A549 (cell line): ENCODE measurements at regions of chr12 and their contacts with region 1.

Region 1: GRCh38 chr12:52121824-52122539 is 42.5 kb downstream of the SMIM41 start:
- DNase-seq: peak; percentile 67 to 68
- ATAC-seq: peak; percentile 64 to 75
- H3K4me3 ChIP-seq: no peak overlapping the region
- H3K27ac ChIP-seq: no peak overlapping the region
- H3K4me1 ChIP-seq: peaks cover 5% of the 10 kb centered on the region; the same call in 2 of the 3 replicates
- CTCF ChIP-seq: peak; percentile 80
- EP300 ChIP-seq: no peak
- POLR2A ChIP-seq: no peak
- RAD21 ChIP-seq: peak; percentile 77 to 79

Region 2: DNA sequence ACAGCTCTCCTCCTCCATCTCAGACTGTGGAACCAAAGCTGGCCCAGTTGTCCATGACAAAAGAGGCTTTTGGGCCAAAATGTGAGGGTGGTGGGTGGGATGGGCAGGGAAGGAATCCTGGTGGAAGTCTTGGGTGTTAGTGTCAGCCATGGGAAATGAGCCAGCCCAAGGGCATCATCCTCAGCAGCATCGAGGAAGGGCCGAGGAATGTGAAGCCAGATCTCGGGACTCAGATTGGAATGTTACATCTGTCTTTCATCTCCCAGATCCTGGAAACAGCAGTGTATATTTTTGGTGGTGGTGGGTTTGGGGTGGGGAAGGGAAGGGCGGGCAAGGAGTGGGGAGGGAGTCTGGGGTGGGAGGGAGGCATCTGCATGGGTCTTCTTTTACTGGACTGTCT is 127.0 kb before region 1 on chr12:
- CTCF ChIA-PET with region 1: interaction called, 23 read pairs
- POLR2A ChIA-PET with region 1: no interaction called
- DNase-seq: no peak
- ATAC-seq: no peak
- H3K4me3 ChIP-seq: no peak overlapping the region
- H3K27ac ChIP-seq: no peak overlapping the region
- H3K4me1 ChIP-seq: peaks cover 4% of the 10 kb centered on the region; the same call in 2 of the 3 replicates
- CTCF ChIP-seq: no peak
- EP300 ChIP-seq: no peak
- POLR2A ChIP-seq: no peak
- RAD21 ChIP-seq: no peak

Region 3: DNA sequence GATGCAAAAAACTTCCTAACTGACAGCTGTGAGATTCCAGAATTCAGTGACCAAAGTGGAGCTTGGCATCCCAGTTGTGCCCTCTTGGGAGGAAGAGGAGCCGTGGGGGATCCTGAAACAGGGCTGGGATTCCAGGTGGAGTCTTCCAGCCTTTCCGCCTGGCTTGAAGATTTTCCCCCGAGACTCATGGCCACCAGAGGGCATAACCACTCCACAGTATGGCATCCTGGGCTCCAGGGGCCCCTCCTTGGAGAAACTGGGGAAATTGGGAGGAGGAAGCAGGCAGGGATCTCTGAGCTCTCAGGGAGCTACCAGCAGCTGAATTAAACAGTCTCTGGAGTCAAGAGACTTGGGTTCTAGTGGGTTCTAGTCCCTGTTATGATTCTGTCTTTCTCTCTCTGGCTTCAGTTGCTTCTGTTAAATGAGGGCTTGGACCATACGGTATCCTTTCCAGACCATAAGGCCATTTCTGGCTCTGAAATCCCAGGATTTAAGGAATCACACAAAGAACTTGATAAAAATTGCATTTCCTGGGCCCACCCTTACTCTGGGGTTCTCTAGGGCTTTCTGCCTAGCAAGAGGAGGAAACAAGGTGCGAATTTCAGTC is 117.8 kb before region 1 on chr12:
- CTCF ChIA-PET with region 1: interaction called, 50 read pairs
- POLR2A ChIA-PET with region 1: no interaction called
- DNase-seq: peak; percentile 69 to 78
- ATAC-seq: peak; percentile 73 to 83
- H3K4me3 ChIP-seq: no peak overlapping the region
- H3K27ac ChIP-seq: no peak overlapping the region
- H3K4me1 ChIP-seq: 0 out of 3 replicates have a peak, but pooled peaks cover 3% of the 10 kb centered on the region
- CTCF ChIP-seq: peak; percentile 88
- EP300 ChIP-seq: no peak
- POLR2A ChIP-seq: no peak
- RAD21 ChIP-seq: peak; percentile 90 to 95

Region 4: GRCh38 chr12:52032804-52033502 is 89.0 kb before region 1 on chr12:
- CTCF ChIA-PET with region 1: interaction called, 304 read pairs
- POLR2A ChIA-PET with region 1: interaction called, 10 read pairs
- DNase-seq: peak; percentile 97
- ATAC-seq: peak; percentile 93 to 94
- H3K4me3 ChIP-seq: peak overlapping the region; percentile 32
- H3K27ac ChIP-seq: peak overlapping the region; percentile 65 to 77
- H3K4me1 ChIP-seq: peaks cover 28% of the 10 kb centered on the region
- CTCF ChIP-seq: no peak
- EP300 ChIP-seq: no peak
- POLR2A ChIP-seq: 0 out of 2 replicates have a peak, but pooled peaks have one; percentile 11
- RAD21 ChIP-seq: no peak

Region 5: DNA sequence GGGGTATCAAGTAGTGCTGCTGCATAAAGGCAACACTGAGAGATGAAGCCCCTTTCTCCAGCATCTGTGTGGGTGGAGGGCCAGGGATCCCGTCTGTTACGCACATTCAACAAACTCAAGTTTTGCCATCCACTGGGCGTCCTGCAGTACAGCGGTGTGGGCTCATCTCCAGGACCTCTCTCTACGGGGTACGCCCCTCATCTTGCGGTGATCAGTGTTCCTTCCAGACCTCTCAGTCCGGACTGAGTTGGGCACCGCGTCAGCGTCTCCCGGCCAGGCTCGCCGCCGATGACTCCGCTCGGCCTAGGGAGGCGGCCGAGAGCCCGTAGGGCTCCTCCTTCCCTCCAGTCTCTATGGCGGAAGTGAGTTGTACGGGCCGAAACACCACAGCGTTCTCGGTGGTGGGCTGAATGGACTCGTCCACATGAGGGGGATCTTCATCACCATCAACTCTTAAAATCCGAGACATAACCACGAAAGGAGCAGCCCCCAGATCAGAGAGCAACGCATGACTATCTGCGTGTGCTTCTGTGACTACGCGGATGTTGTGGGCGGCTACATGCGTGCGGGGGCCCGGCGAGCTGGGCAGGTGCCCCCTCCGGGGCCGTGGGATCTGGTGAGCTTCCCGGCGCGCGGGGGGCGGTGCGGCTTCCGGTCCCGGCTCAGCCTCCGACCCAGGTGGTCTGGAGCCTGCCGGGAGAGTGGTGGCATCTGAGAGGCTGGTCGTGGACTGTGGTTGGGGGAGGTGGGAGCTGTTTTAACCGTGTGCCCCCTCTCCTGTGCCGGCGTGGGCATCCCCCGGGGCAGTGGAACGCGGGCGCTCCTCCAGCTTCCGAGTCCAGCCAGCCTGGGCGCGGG is 52.4 kb before region 1 on chr12 and contains the start of gene ATG101:
- CTCF ChIA-PET with region 1: interaction called, 25 read pairs
- POLR2A ChIA-PET with region 1: no interaction called
- DNase-seq: peak; percentile 98
- ATAC-seq: peak; percentile 93 to 95
- H3K4me3 ChIP-seq: peak within 1 kb of the TSS; percentile 100
- H3K27ac ChIP-seq: peak within 1 kb of the TSS; percentile 98 to 100
- H3K4me1 ChIP-seq: peaks cover 16% of the 10 kb centered on the region
- CTCF ChIP-seq: peak; percentile 54
- EP300 ChIP-seq: no peak
- POLR2A ChIP-seq: peak; percentile 92
- RAD21 ChIP-seq: peak in 1 of 2 experiments; percentile 20; a peak in 3 of 5 replicates
- polyA plus RNA-seq, gene ATG101: 124 and 141 TPM in 2 replicates

Region 6: DNA sequence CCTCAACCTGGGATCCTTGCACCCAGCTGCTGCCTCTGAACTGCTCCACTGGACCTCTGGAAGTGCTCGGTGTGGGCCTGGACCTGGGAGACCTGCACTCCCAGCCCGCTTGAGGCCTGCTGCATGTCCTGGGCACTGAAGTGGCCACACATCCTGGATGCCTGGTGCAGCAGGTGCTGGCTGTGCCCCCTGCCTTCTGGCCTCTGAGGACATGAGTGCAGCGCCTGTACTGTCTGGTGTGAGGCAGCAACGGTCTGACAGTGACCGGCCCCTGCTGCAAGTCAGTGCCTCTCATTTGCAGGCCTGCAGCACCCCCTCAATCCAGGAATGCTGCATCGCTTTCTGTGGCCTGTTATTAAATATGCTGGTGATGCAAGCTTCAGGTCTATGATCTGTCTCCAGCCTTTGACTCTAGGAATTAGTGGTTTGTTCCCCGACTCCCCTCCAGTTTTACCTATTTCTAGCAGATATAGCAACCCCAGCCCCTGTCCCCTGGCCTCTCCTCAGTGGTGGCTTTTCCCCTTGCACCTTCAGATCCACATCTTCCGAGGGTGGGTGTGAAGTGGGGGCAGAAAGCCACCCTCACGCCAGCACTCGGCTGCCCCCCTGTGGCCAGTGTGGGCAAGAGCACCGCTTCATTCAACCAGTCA is 38.9 kb before region 1 on chr12:
- CTCF ChIA-PET with region 1: interaction called, 94 read pairs
- POLR2A ChIA-PET with region 1: no interaction called
- DNase-seq: peak; percentile 57 to 85
- ATAC-seq: peak; percentile 54 to 76
- H3K4me3 ChIP-seq: no peak overlapping the region
- H3K27ac ChIP-seq: 0 out of 6 replicates have a peak overlapping the region, but pooled peaks of 1 of the 2 experiments have one; percentile 1
- H3K4me1 ChIP-seq: peaks cover 2% of the 10 kb centered on the region; the same call in 1 of the 3 replicates
- CTCF ChIP-seq: peak; percentile 95
- EP300 ChIP-seq: no peak
- POLR2A ChIP-seq: no peak
- RAD21 ChIP-seq: peak; percentile 86 to 91

Region 7: DNA sequence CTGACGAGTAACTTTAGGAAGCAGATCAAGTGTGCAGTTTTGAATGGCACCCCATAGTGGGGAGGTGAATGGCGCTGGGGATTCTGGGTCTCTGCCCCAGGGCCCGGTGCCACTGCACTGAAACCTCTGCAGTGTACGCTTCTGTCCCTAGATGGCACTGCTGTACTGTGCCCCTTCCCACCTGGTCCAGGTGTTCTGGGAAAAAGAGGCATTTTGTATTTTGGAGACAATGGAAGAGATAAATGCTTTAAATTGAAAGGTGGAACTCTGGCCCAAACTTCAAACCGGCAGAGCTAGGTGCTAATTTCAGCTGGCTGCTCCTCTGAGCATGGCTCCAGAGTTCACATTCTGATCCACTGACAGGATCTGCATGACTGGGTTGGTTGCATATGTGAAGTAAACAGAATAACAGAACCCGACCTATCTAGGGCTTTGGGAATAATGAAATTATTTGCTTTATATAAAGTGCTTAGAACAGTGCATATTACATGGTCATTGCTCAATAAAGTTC is 17.6 kb after region 1 on chr12:
- CTCF ChIA-PET with region 1: interaction called, 43 read pairs
- POLR2A ChIA-PET with region 1: no interaction called
- DNase-seq: peak; percentile 68 to 90
- ATAC-seq: peak; percentile 64 to 66; a peak in 5 of 6 replicates
- H3K4me3 ChIP-seq: no peak overlapping the region
- H3K27ac ChIP-seq: peak overlapping the region; percentile 100; a peak in 5 of 6 replicates
- H3K4me1 ChIP-seq: peaks cover 26% of the 10 kb centered on the region
- CTCF ChIP-seq: peak; percentile 97
- EP300 ChIP-seq: no peak
- POLR2A ChIP-seq: no peak
- RAD21 ChIP-seq: peak; percentile 92 to 97